PC-3 (cell line): ENCODE measurements at regions of chr7 and their contacts with region 1.

Region 1: DNA sequence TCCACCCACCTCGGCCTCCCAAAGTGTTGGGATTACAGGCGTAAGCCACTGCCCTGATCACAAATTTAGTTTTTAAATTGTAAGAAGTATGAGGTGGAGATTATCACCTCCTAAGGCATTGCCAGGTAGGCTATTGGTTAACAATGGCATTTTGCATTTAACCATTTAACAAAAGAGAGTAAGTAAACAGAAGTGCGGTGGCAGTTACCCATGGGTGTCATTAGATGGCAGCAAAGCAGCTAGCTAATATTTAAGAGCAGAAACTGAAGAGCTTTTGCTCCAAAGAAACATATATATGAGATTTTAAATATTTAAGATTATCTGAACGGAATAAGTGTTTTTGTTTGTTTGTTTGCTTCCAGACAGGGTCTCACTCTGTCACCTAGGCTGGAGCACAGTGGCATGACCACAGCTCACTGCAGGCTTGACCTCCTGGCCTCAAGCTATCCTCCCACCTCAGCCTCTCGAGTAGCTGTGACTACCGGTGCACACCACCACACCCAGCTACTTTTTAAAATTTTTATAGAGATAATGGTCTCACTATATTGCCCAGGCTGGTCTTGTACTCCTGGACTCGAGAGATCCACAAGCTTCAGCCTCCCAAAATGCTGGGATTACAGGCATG is 325.5 kb upstream of the C7orf33 start:
- DNase-seq: peak; percentile 69
- ATAC-seq: peak; percentile 49
- H3K4me3 ChIP-seq: no peak overlapping the region
- H3K27ac ChIP-seq: no peak overlapping the region
- H3K4me1 ChIP-seq: no peaks in the 10 kb centered on the region
- H3K27me3 ChIP-seq: peaks cover 29% of the 10 kb centered on the region
- CTCF ChIP-seq: peak; percentile 72

Region 2: GRCh38 chr7:148485618-148486017 is 220.6 kb after region 1 on chr7:
- CTCF ChIA-PET with region 1: interaction called, 7 read pairs
- POLR2A ChIA-PET with region 1: no interaction called
- intact Hi-C with region 1: loop called (anchors 1 kb)
- DNase-seq: peak; percentile 12
- ATAC-seq: peak; percentile 73
- H3K4me3 ChIP-seq: no peak overlapping the region
- H3K27ac ChIP-seq: no peak overlapping the region
- H3K4me1 ChIP-seq: no peaks in the 10 kb centered on the region
- H3K27me3 ChIP-seq: peaks cover 53% of the 10 kb centered on the region
- CTCF ChIP-seq: peak; percentile 48; the same call in 1 of the 2 replicates

Region 3: DNA sequence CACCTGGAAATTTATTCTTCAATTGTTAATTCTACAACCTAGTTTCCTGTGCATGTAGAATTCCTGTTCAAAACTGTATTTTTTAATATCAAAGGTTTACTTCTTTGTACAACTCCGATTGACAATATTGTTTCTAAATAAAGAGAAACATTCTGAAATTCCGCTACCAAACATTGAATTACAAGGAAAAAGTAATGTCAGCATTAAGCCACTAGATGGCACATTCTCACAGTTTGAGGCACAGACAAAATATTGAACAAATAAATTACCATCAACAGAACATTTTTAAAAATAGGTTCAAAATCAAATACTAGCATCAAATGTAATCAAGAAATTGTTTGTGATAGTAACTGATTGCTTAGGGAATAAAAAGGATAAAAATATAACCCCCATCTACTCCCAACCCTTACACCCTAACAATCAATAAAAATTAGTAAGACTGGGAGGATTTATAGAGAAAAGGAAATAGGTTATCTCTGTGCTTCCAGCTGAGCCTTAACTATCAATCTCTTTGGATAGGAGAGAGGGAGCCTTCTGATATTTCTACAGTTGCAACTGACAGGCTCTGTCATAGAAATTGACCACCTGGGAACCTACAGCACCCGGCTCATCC is 238.9 kb after region 1 on chr7:
- CTCF ChIA-PET with region 1: no interaction called
- POLR2A ChIA-PET with region 1: no interaction called
- intact Hi-C with region 1: loop called (anchors 5 kb)
- DNase-seq: peak; percentile 57
- ATAC-seq: no peak
- H3K4me3 ChIP-seq: no peak overlapping the region
- H3K27ac ChIP-seq: no peak overlapping the region
- H3K4me1 ChIP-seq: no peaks in the 10 kb centered on the region
- H3K27me3 ChIP-seq: peaks cover 52% of the 10 kb centered on the region
- CTCF ChIP-seq: peak; percentile 80

Region 4: GRCh38 chr7:148527707-148528168 is 262.7 kb after region 1 on chr7:
- CTCF ChIA-PET with region 1: no interaction called
- POLR2A ChIA-PET with region 1: no interaction called
- intact Hi-C with region 1: loop called (anchors 1 kb)
- DNase-seq: peak; percentile 84
- ATAC-seq: peak; percentile 99
- H3K4me3 ChIP-seq: no peak overlapping the region
- H3K27ac ChIP-seq: no peak overlapping the region
- H3K4me1 ChIP-seq: no peaks in the 10 kb centered on the region
- H3K27me3 ChIP-seq: peaks cover 33% of the 10 kb centered on the region
- CTCF ChIP-seq: peak; percentile 90